ENCODE measurements at regions of chr3 and their contacts with region 1.

Region 1: GRCh38 chr3:94525043-94525442 is 462.2 kb downstream of the NSUN3 start:
- DNase-seq: peak; percentile 42 to 51
- H3K4me3 ChIP-seq: no peak overlapping the region
- H3K4me3 Mint-ChIP-seq: peak overlapping the region; percentile 54
- H3K27ac Mint-ChIP-seq: peak overlapping the region; percentile 34
- H3K4me1 ChIP-seq: peaks cover 30% of the 10 kb centered on the region
- H3K4me1 Mint-ChIP-seq: peaks cover 29% of the 10 kb centered on the region
- H3K27me3 ChIP-seq: no peaks in the 10 kb centered on the region
- H3K27me3 Mint-ChIP-seq: no peaks in the 10 kb centered on the region
- CTCF ChIP-seq: peak; percentile 51 to 58

Region 2: DNA sequence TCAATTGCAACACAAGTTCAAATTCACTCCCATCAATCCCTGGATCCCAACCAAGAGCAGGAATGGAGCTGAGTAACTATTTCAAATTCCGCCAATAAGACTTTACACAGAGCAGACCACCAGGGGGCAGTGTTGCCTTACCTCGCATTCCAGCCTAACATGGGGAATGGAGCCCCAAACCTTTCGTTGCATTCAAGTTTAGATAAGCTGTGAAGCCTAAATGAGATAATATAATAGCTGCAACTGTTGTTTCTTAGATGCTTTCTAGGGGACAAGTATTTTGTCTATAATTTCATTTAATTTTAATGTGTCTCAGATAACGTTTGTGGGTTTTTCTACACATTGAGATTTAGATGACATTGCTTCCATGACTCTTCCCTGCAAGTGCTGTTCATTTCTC is 275.5 kb before region 1 on chr3:
- CTCF ChIA-PET with region 1: interaction called, 6 read pairs
- POLR2A ChIA-PET with region 1: no interaction called
- intact Hi-C with region 1: loop called (anchors 1 kb)
- DNase-seq: peak; percentile 48 to 73
- H3K4me3 ChIP-seq: no peak overlapping the region
- H3K4me3 Mint-ChIP-seq: no peak overlapping the region
- H3K27ac Mint-ChIP-seq: no peak overlapping the region
- H3K4me1 ChIP-seq: peaks cover 29% of the 10 kb centered on the region
- H3K4me1 Mint-ChIP-seq: peaks cover 25% of the 10 kb centered on the region
- H3K27me3 ChIP-seq: no peaks in the 10 kb centered on the region
- H3K27me3 Mint-ChIP-seq: peaks cover 2% of the 10 kb centered on the region
- CTCF ChIP-seq: peak; percentile 70 to 74

Region 3: DNA sequence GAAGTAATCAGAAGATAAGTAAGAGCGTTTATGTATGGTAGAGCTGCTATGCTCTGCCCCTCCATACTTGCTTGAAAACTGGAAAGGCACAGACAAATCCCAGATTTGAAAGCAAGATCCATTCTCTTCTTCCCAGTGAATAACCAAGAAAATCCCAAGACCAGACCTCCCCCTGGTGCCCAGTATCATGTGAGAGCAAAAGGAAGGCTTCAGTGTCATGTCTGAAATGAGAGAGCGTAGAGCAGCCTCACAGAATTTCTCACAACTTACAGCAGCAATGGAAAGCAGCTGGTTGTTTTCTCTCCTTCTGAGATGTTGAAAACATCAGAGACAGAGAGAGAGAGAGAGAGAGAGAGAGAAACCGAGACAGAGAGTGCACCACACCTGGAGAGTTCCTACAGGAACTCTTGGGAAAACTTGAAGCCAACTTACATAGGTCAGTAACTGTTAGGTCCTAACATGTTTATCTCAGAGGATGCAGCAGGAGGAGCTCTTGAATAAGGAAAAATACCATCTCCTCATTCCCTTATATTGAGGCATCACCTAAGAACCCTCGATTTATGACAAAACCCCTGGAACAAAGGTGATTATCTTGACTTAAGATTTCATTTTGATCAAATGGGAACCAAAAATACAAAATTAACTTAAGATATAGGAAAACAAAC is 188.9 kb before region 1 on chr3:
- CTCF ChIA-PET with region 1: no interaction called
- POLR2A ChIA-PET with region 1: no interaction called
- intact Hi-C with region 1: loop called (anchors 2 kb)
- DNase-seq: peak in 1 of 2 experiments; percentile 52
- H3K4me3 ChIP-seq: no peak overlapping the region
- H3K4me3 Mint-ChIP-seq: peak overlapping the region; percentile 2
- H3K27ac Mint-ChIP-seq: peak overlapping the region; percentile 15
- H3K4me1 ChIP-seq: peaks cover 7% of the 10 kb centered on the region; the same call in 1 of the 2 replicates
- H3K4me1 Mint-ChIP-seq: peaks cover 28% of the 10 kb centered on the region
- H3K27me3 ChIP-seq: no peaks in the 10 kb centered on the region
- H3K27me3 Mint-ChIP-seq: no peaks in the 10 kb centered on the region
- CTCF ChIP-seq: peak; percentile 41 to 62

Region 4: GRCh38 chr3:94453864-94454263 is 71.2 kb before region 1 on chr3:
- CTCF ChIA-PET with region 1: no interaction called
- POLR2A ChIA-PET with region 1: no interaction called
- intact Hi-C with region 1: no loop called
- DNase-seq: no peak
- H3K4me3 ChIP-seq: no peak overlapping the region
- H3K4me3 Mint-ChIP-seq: no peak overlapping the region
- H3K27ac Mint-ChIP-seq: no peak overlapping the region
- H3K4me1 ChIP-seq: no peaks in the 10 kb centered on the region
- H3K4me1 Mint-ChIP-seq: peaks cover 7% of the 10 kb centered on the region
- H3K27me3 ChIP-seq: no peaks in the 10 kb centered on the region
- H3K27me3 Mint-ChIP-seq: no peaks in the 10 kb centered on the region
- CTCF ChIP-seq: no peak

Region 5: GRCh38 chr3:94544131-94544655 is 19.1 kb after region 1 on chr3:
- CTCF ChIA-PET with region 1: no interaction called
- POLR2A ChIA-PET with region 1: no interaction called
- intact Hi-C with region 1: loop called (anchors 1 kb)
- DNase-seq: peak in 1 of 2 experiments; percentile 29
- H3K4me3 ChIP-seq: no peak overlapping the region
- H3K4me3 Mint-ChIP-seq: peak overlapping the region; percentile 45
- H3K27ac Mint-ChIP-seq: peak overlapping the region; percentile 66
- H3K4me1 ChIP-seq: peaks cover 30% of the 10 kb centered on the region
- H3K4me1 Mint-ChIP-seq: peaks cover 20% of the 10 kb centered on the region
- H3K27me3 ChIP-seq: no peaks in the 10 kb centered on the region
- H3K27me3 Mint-ChIP-seq: no peaks in the 10 kb centered on the region
- CTCF ChIP-seq: no peak

Region 6: GRCh38 chr3:94716326-94717010 is 191.4 kb after region 1 on chr3:
- CTCF ChIA-PET with region 1: interaction called, 4 read pairs
- POLR2A ChIA-PET with region 1: no interaction called
- intact Hi-C with region 1: loop called (anchors 1 kb)
- DNase-seq: peak in 1 of 2 experiments; percentile 29
- H3K4me3 ChIP-seq: no peak overlapping the region
- H3K4me3 Mint-ChIP-seq: no peak overlapping the region
- H3K27ac Mint-ChIP-seq: no peak overlapping the region
- H3K4me1 ChIP-seq: no peaks in the 10 kb centered on the region
- H3K4me1 Mint-ChIP-seq: no peaks in the 10 kb centered on the region
- H3K27me3 ChIP-seq: no peaks in the 10 kb centered on the region
- H3K27me3 Mint-ChIP-seq: no peaks in the 10 kb centered on the region
- CTCF ChIP-seq: peak; percentile 14 to 43

Region 7: GRCh38 chr3:94961446-94962080 is 436.5 kb after region 1 on chr3:
- CTCF ChIA-PET with region 1: no interaction called
- POLR2A ChIA-PET with region 1: no interaction called
- intact Hi-C with region 1: loop called (anchors 1 kb)
- DNase-seq: peak; percentile 70 to 76
- H3K4me3 ChIP-seq: no peak overlapping the region
- H3K4me3 Mint-ChIP-seq: peak overlapping the region; percentile 9
- H3K27ac Mint-ChIP-seq: peak overlapping the region; percentile 67
- H3K4me1 ChIP-seq: peaks cover 32% of the 10 kb centered on the region
- H3K4me1 Mint-ChIP-seq: peaks cover 10% of the 10 kb centered on the region
- H3K27me3 ChIP-seq: no peaks in the 10 kb centered on the region
- H3K27me3 Mint-ChIP-seq: no peaks in the 10 kb centered on the region
- CTCF ChIP-seq: no peak